Head of caudate nucleus (tissue), 42 donors: ENCODE measurements at regions of chr16 and their contacts with region 1.

Region 1: GRCh38 chr16:58661199-58661830 is 23.3 kb downstream of the SLC38A7 start:
- DNase-seq: peak in 26 of 42 donors; percentile 18 to 78 (median 38)

Region 2: DNA sequence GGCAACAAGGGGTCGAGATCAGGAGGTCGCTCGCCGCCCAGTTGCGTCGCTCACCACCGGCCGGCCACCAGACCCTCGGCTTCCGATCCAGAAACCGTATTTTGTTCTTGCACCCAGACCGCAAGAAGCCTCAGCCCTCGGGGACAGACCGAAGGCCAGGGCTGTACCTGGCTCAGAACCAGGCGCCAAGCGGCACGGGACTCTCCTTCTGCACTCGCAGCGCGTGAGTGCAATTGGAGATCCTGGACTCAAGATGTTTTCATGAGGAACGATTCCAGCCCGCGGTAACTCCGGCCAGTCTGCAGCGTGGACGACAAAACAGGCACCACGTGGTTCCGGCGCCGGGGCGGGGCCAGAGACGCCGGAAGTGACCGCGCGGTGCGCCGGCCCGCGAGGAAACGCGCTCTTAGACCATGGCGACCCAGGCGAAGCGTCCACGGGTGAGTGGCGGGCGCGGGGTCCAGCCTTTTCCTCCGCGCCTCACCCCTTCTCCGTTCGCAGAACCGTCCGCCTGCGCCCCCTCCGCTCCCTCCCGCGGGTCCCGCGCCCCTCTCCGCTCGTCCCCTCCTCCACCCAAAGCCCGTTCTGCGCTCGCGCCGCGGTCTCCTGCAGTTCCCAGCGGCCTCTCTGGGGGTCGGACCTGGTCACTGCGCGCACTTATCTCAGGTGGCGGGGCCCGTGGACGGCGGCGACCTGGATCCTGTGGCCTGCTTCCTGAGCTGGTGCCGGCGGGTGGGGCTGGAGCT is 146.0 kb before region 1 on chr16 and contains the start of gene SETD6:
- intact Hi-C with region 1: loop called (anchors 10 kb)
- DNase-seq: peak; percentile 81 to 97 (median 92)

Region 3: DNA sequence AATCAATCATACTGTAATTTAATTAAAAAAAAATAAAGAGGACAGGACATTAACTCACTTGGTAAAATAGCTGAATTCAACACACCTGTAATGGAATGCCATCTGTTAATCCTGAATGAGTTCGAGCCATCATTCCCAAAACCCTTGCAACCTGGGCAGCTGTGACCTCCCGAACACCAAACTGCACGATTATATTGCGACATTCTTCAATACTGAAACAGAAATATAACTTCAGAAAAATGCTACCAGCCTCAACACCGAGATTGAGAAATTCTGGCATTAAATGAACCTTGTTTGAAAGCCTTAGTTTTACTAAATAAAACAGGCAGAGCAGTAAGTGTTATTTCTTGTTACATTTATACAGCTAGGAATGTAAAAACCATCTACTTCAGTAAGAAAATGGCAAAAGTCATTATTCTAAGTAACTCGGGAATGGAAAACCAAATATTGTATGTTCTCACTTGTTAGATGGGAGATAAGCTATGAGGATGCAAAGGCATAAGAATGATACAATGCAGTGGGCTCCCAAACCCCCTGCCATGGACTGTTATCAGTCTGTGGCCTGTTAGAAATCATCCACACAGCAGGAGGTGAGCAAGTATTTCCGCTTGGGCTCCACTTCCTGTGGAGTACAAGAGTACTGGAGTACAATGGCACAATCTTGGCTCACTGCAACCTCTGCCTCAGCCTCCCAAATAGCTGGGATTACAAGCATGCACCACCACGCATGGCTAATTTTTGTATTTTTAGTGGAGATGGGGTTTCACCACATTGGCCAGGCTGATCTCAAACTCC is 78.1 kb before region 1 on chr16:
- intact Hi-C with region 1: no loop called
- DNase-seq: no peak